ENCODE measurements at regions of chr16 and their contacts with region 1.

Region 1: GRCh38 chr16:24539291-24539849 is at the start of gene RBBP6:
- DNase-seq: peak; percentile 99
- ATAC-seq: peak; percentile 92
- H3K4me3 ChIP-seq: peak within 1 kb of the TSS; percentile 81 to 99 (median 97)
- H3K4me3 Mint-ChIP-seq: peak within 1 kb of the TSS; percentile 99
- H3K27ac ChIP-seq: peak within 1 kb of the TSS; percentile 99 to 100
- H3K27ac Mint-ChIP-seq: peak within 1 kb of the TSS; percentile 100
- H3K4me1 ChIP-seq: peaks cover 41 to 42% of the 10 kb centered on the region in 2 donors
- H3K4me1 Mint-ChIP-seq: peaks cover 41% of the 10 kb centered on the region
- H3K27me3 ChIP-seq: no peaks in the 10 kb centered on the region
- H3K27me3 Mint-ChIP-seq: no peaks in the 10 kb centered on the region
- CTCF ChIP-seq: no peak
- total RNA-seq, gene RBBP6: 132 and 139 TPM in 2 replicates

Region 2: DNA sequence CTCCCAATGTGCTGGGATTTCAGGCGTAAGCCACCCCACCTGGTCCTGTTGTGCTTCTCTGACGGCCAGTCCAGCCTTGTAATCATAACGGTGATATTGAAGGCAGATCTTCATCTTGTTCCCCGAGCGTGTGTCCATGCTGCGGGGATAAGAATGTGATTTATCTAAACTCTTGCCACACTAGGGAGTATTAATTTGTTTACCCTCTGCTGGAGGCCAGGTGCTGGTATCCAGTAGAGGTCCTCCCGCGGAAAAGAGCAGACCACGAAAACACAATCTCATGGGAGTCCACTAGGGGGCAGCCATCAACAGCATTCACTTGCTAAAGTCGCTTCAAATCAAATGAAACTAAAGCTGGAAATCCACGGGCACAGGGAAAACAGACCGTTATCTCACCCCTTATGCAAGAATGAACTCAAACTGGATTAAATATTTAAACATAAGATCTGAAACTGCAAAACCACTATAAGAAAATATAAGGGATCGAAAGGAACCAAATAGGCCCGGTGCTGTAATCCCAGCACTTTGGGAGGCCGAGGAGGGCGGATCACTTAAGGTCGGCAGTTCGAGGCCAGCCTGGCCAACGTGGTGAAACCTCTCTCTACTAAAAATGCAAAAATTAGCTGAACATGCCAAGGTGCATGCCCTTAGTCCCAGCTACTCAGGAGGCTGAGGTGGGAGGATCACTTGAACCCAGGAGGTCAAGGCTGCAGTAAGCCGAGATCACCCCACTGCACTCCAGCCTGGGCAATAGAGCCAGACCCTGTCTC is 22.3 kb before region 1 on chr16:
- CTCF ChIA-PET with region 1: interaction called, 13 read pairs
- POLR2A ChIA-PET with region 1: no interaction called
- intact Hi-C with region 1: loop called (anchors 1 kb)
- DNase-seq: peak; percentile 80
- ATAC-seq: peak; percentile 68
- H3K4me3 ChIP-seq: no peak overlapping the region
- H3K4me3 Mint-ChIP-seq: peak overlapping the region; percentile 68
- H3K27ac ChIP-seq: no peak overlapping the region
- H3K27ac Mint-ChIP-seq: no peak overlapping the region
- H3K4me1 ChIP-seq: peaks cover 6 to 8% of the 10 kb centered on the region in 2 donors
- H3K4me1 Mint-ChIP-seq: peaks cover 6% of the 10 kb centered on the region
- H3K27me3 ChIP-seq: no peaks in the 10 kb centered on the region
- H3K27me3 Mint-ChIP-seq: peaks cover 8% of the 10 kb centered on the region
- CTCF ChIP-seq: peak; percentile 86

Region 3: DNA sequence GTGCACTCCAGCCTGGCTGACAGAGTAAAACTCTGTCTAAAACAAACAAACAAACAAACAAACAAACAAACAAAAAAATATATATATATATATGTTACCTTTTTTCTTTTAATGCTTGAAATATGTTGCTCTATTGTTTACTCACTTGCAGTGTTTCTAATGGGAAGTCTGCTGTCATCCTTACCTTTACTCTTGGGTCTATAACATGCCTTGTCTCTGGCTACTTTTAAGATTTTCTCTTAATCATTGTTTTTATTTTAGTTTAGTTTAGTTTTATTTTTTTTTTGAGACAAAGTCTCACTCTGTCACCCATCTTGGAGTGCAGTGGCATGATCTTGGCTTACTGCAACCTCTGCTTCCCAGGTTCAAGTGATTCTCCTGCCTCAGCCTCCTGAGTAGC is 174.0 kb after region 1 on chr16:
- CTCF ChIA-PET with region 1: no interaction called
- POLR2A ChIA-PET with region 1: no interaction called
- intact Hi-C with region 1: no loop called
- DNase-seq: no peak
- ATAC-seq: no peak
- H3K4me3 ChIP-seq: no peak overlapping the region
- H3K4me3 Mint-ChIP-seq: no peak overlapping the region
- H3K27ac ChIP-seq: no peak overlapping the region
- H3K27ac Mint-ChIP-seq: no peak overlapping the region
- H3K4me1 ChIP-seq: no peaks in the 10 kb centered on the region
- H3K4me1 Mint-ChIP-seq: no peaks in the 10 kb centered on the region
- H3K27me3 ChIP-seq: peaks cover 0 to 4% (median 2%) of the 10 kb centered on the region in 4 experiments
- H3K27me3 Mint-ChIP-seq: peaks cover 12% of the 10 kb centered on the region
- CTCF ChIP-seq: no peak

Region 4: DNA sequence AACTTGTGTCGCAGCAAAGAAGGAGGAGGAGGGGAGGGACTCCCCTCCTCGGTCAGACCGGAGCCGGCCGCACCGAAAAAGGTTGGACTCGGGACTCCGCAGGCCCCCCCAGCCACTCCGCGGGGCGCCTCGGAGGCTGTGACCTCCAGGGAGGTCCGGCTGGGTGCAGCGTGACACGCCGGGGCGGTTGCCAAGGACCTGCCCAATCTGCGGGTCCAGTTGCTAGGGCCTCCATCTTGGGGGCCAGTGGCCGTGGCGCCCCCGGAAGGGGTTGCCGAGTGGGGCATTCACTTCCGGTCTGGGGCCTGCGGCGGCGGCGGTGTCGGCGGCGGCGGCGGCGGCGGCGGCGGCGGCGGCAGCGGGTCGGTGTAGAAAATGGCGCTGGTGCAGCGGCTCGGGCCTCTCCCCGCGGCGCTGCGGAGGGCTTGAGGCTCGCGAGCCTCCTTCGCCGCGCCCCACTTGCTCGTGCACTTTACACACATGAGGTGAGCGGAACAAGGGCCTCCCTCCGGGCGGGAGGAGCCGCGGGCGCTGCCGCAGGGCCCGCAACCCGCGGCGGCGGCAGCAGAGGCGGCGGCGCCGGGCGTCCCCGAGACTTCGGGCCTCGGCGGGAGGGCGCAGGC is 190.1 kb after region 1 on chr16 and contains the start of gene TNRC6A:
- CTCF ChIA-PET with region 1: interaction called, 7 read pairs
- POLR2A ChIA-PET with region 1: no interaction called
- intact Hi-C with region 1: loop called (anchors 1 kb)
- DNase-seq: peak; percentile 96
- ATAC-seq: peak; percentile 84
- H3K4me3 ChIP-seq: peak within 1 kb of the TSS; percentile 80 to 97 (median 81)
- H3K4me3 Mint-ChIP-seq: peak within 1 kb of the TSS; percentile 96
- H3K27ac ChIP-seq: peak within 1 kb of the TSS; percentile 98
- H3K27ac Mint-ChIP-seq: peak within 1 kb of the TSS; percentile 98
- H3K4me1 ChIP-seq: peaks cover 12 to 16% of the 10 kb centered on the region in 2 donors
- H3K4me1 Mint-ChIP-seq: peaks cover 37% of the 10 kb centered on the region
- H3K27me3 ChIP-seq: no peaks in the 10 kb centered on the region
- H3K27me3 Mint-ChIP-seq: no peaks in the 10 kb centered on the region
- CTCF ChIP-seq: no peak
- total RNA-seq, gene TNRC6A: 96.7 and 104 TPM in 2 replicates

Region 5: GRCh38 chr16:25257504-25257955 is 718.2 kb after region 1 on chr16 and contains the start of gene ZKSCAN2:
- CTCF ChIA-PET with region 1: no interaction called
- POLR2A ChIA-PET with region 1: no interaction called
- intact Hi-C with region 1: loop called (anchors 2 kb)
- DNase-seq: peak; percentile 91
- ATAC-seq: peak; percentile 90
- H3K4me3 ChIP-seq: peak within 1 kb of the TSS; percentile 57 to 81 (median 79)
- H3K4me3 Mint-ChIP-seq: peak within 1 kb of the TSS; percentile 98
- H3K27ac ChIP-seq: peak within 1 kb of the TSS; percentile 79 to 92
- H3K27ac Mint-ChIP-seq: peak within 1 kb of the TSS; percentile 98
- H3K4me1 ChIP-seq: peaks cover 20 to 28% of the 10 kb centered on the region in 2 donors
- H3K4me1 Mint-ChIP-seq: peaks cover 38% of the 10 kb centered on the region
- H3K27me3 ChIP-seq: no peaks in the 10 kb centered on the region
- H3K27me3 Mint-ChIP-seq: no peaks in the 10 kb centered on the region
- CTCF ChIP-seq: no peak
- total RNA-seq, gene ZKSCAN2: 9.0 and 9.1 TPM in 2 replicates

Measured in B cell (primary cell).